Gastrocnemius medialis (tissue), 4 donors: ENCODE measurements at regions of chr12 and their contacts with region 1.

Region 1: DNA sequence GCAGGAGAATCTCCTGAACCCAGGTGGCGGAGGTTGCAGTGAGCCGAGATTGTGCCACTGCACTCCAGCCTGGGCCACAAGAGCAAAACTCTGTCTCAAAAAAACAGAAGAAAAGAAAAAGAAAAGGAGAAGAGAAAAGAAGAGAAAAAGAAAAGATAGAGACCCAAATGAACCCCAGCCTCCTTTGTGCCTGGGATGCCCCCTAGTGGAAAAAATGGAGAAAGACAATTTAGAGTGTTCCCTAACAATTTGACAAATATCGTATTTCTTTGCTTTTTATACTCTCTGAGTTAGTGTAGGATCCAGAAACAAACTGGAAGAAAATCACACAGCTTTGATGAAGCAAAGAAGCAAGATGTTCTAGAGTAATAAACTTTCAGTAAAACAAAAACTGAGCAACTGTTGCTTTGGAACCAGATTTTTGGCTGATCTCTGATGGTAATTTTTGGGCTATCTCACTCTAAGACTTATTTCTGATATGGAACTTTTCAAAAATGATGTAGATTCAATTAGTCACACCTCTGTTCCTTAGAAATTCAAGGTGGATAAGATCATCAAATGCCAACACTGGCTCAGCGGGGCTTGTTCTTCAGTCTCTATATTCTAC is 18.6 kb upstream of the PRKAB1 start:
- DNase-seq: no peak
- ATAC-seq: no peak
- H3K4me3 ChIP-seq: no peak overlapping the region
- H3K27ac ChIP-seq: no peak overlapping the region
- H3K4me1 ChIP-seq: peaks cover 4 to 5% of the 10 kb centered on the region in 2 donors
- H3K27me3 ChIP-seq: no peaks in the 10 kb centered on the region
- CTCF ChIP-seq: peak; percentile 46 to 77 (median 69)
- POLR2A ChIP-seq: no peak

Region 2: DNA sequence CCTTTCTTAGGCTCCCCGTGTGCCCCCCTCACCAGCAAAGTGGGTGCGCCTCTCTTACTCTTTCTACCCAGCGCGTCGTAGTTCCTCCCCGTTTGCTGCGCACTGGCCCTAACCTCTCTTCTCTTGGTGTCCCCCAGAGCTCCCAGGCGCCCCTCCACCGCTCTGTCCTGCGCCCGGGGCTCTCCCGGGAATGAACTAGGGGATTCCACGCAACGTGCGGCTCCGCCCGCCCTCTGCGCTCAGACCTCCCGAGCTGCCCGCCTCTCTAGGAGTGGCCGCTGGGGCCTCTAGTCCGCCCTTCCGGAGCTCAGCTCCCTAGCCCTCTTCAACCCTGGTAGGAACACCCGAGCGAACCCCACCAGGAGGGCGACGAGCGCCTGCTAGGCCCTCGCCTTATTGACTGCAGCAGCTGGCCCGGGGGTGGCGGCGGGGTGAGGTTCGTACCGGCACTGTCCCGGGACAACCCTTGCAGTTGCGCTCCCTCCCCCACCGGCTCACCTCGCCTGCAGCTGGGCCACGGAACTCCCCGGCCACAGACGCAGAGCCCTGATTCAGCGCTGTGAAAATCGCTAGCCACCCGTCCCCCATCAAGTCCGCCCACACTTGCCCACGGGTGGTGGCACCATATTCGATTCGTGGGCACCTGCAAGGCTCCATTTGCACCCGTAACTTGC is 54.4 kb before region 1 on chr12:
- in situ Hi-C with region 1: no loop called
- intact Hi-C with region 1: loop called (anchors 2 kb)
- DNase-seq: peak; percentile 83 to 91
- ATAC-seq: peak; percentile 58 to 65
- H3K4me3 ChIP-seq: peak overlapping the region; percentile 74 to 91 (median 82)
- H3K27ac ChIP-seq: peak overlapping the region; percentile 92 to 98 (median 96)
- H3K4me1 ChIP-seq: peaks cover 35 to 43% of the 10 kb centered on the region in 2 donors
- H3K27me3 ChIP-seq: no peaks in the 10 kb centered on the region
- CTCF ChIP-seq: peak in 1 of 5 experiments; percentile 16
- POLR2A ChIP-seq: peak; percentile 86 to 89